ENCODE measurements at regions of chr1 and their contacts with region 1.

Region 1: DNA sequence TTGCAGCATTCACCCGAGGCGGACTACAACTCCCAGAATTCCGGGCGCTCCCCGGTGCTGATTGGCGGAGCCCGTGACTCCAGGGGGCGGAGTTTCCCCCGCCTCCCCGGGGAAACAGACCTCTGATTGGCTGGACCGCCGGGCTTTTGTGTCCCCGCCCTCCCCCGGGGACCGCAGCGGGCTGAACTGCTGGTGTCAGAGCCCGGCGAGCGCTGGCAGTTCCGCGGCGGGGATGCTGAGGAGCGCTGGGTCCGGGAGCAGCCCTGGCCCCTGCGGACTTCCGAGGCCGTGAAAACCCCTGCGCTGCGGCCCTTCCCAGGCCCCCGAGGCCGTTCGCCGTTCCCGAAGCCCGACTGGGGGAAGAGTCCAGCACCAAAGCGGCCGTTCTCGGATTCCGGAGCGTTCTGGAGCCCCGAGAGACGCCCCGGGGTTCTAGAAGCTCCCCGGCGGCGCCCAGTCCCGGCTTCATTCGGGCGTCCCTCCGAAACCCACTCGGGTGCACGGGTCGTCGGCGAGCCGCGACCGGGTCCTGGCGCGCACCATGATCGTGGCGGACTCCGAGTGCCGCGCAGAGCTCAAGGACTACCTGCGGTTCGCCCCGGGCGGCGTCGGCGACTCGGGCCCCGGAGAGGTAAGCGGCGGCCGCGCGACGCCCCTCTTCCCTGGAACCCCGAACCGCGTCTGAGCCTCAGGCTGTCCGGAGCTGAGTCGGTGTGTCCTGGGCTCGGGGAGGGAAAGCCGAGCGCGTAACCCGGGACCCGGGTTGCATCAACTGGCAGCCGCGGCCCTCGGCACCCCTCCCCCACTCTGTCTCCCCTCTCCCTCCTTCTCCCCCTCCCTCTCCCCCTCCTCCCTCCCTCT is at the start of gene SESN2:
- DNase-seq: peak; percentile 99
- ATAC-seq: peak; percentile 98
- H3K4me3 Mint-ChIP-seq: peak within 1 kb of the TSS; percentile 82
- H3K27ac Mint-ChIP-seq: peak within 1 kb of the TSS; percentile 79
- H3K4me1 Mint-ChIP-seq: peaks cover 23% of the 10 kb centered on the region
- H3K27me3 Mint-ChIP-seq: peaks cover 6% of the 10 kb centered on the region
- CTCF ChIP-seq: no peak
- total RNA-seq, gene SESN2: 19.5 and 19.8 TPM in 2 replicates

Region 2: DNA sequence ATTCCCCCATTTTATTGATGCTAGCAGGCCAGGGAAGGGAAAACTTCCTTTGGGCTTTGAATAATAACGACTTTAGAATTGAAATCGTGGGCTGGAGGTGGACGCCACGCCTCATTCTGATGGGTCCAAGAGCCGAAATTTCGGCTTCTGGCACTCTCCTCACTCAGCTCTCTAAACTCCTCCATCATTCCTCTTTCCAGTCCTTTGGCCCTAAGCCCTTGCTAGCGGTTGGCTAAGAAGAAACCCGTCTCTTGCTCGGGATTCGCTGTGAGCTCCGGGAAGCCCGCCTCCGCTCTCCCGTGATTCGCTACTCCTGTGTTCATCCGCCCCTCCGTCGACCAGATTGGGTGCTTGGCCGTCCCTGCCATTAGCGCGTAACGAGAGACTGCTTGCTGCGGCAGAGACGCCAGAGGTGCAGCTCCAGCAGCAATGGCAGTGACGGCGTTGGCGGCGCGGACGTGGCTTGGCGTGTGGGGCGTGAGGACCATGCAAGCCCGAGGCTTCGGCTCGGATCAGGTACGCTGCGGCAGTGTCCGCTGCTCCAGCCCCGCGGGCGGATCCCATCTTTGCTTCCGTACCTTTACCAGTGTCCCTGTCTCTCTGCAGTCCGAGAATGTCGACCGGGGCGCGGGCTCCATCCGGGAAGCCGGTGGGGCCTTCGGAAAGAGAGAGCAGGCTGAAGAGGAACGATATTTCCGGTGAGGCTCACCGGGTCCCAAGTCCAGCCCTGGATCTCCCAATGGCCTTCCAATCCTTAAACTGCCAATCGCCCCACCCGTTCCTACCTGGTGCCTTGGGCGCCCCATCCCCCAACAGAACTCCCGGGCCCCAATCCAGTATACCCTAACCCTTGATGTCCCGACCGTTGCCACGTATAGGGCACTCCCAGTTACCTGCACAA is 23.5 kb before region 1 on chr1 and contains the start of gene ATP5IF1:
- CTCF ChIA-PET with region 1: no interaction called
- POLR2A ChIA-PET with region 1: interaction called, 17 read pairs
- intact Hi-C with region 1: loop called (anchors 1 kb)
- DNase-seq: peak; percentile 82
- ATAC-seq: peak; percentile 95
- H3K4me3 Mint-ChIP-seq: no peak within 1 kb of the TSS
- H3K27ac Mint-ChIP-seq: no peak within 1 kb of the TSS
- H3K4me1 Mint-ChIP-seq: peaks cover 27% of the 10 kb centered on the region
- H3K27me3 Mint-ChIP-seq: no peaks in the 10 kb centered on the region
- CTCF ChIP-seq: no peak
- total RNA-seq, gene ATP5IF1: 87.0 and 104 TPM in 2 replicates

Region 3: GRCh38 chr1:28273216-28273860 is 13.8 kb after region 1 on chr1:
- CTCF ChIA-PET with region 1: no interaction called
- POLR2A ChIA-PET with region 1: interaction called, 10 read pairs
- intact Hi-C with region 1: no loop called
- DNase-seq: no peak
- ATAC-seq: no peak
- H3K4me3 Mint-ChIP-seq: no peak overlapping the region
- H3K27ac Mint-ChIP-seq: no peak overlapping the region
- H3K4me1 Mint-ChIP-seq: no peaks in the 10 kb centered on the region
- H3K27me3 Mint-ChIP-seq: no peaks in the 10 kb centered on the region
- CTCF ChIP-seq: no peak